Aorta (tissue), 5 donors: ENCODE measurements at regions of chr14 and their contacts with region 1.

Region 1: GRCh38 chr14:50954811-50955372 is 10.6 kb upstream of the PYGL start:
- DNase-seq: no peak
- ATAC-seq: peak; percentile 85
- H3K4me3 ChIP-seq: no peak overlapping the region
- H3K27ac ChIP-seq: no peak overlapping the region
- H3K4me1 ChIP-seq: no peaks in the 10 kb centered on the region
- H3K27me3 ChIP-seq: no peaks in the 10 kb centered on the region

Region 2: DNA sequence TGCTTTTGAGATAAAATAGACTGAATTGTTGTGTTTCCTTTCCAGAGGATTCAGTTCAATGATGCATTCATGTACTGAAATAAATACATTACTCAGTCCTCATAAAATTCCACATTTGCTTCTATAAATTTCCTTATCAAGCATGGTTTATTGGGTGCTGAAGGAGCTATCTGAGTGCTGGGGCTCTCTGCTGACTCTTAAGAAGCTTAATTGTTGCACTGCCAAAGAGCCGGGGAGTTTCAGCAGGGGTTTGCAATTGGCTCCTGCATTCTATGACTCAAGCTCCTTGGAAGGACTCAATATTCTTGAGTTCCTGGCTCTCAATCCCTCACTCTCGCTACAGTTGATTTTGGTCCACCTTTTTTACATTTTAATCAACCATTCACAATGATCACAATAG is 59.2 kb after region 1 on chr14:
- intact Hi-C with region 1: no loop called
- DNase-seq: peak in 1 of 2 donors; percentile 59
- ATAC-seq: peak; percentile 88
- H3K4me3 ChIP-seq: no peak overlapping the region
- H3K27ac ChIP-seq: no peak overlapping the region
- H3K4me1 ChIP-seq: peaks cover 1 to 3% of the 10 kb centered on the region in 2 donors
- H3K27me3 ChIP-seq: no peaks in the 10 kb centered on the region

Region 3: GRCh38 chr14:51094901-51095853 is 140.3 kb after region 1 on chr14 and contains the start of gene TRIM9:
- intact Hi-C with region 1: loop called in 1 of 2 experiments (anchors 5 kb)
- DNase-seq: peak; percentile 94 to 95
- ATAC-seq: peak; percentile 91
- H3K4me3 ChIP-seq: peak within 1 kb of the TSS; percentile 36 to 65
- H3K27ac ChIP-seq: no peak within 1 kb of the TSS
- H3K4me1 ChIP-seq: no peaks in the 10 kb centered on the region
- H3K27me3 ChIP-seq: no peaks in the 10 kb centered on the region
- total RNA-seq, gene TRIM9: 1.3 to 7.9 TPM

Region 4: DNA sequence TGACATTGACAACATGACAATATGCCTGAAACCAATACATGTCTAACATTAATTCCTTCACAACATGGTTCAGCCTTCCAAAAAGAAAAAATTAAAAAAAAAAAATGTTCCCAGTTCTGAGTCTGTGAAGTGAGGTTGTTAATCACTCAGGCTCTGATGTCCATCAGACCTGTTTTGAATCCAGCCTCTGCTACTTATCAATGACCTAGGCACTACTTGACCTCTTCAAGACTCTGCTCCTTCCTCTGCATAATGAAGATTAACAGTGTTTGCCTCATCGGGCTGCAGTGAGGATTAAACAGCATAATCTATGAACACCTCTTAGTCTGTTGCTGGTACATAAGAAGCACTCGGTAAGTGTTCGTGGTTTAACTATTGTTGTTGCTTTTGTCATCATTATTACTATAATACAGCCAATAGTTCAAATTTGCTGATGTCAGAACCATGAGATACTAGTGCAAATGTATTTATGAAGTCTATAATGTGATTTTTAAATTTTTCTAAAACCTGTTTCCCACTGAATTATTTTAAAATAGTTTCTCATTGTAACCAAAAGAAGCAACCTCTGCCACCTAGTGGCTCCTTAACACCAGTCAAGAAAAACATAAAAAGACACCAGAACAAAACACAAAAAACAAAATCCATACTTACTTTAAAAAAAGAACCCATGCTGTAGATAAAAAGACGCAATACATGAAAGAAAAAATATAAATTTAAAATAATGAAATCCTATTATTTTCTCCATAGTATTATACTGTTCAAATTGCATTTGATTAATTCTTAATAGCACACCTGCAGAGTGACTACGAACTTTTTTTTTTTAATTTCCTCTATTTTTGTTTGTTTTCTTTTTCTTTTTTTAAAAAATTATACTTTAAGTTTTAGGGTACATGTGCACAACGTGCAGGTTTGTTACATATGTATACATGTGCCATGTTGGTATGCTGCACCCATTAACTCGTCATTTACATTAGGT is 264.9 kb after region 1 on chr14:
- intact Hi-C with region 1: loop called (anchors 2 to 5 kb)
- DNase-seq: no peak
- ATAC-seq: no peak
- H3K4me3 ChIP-seq: no peak overlapping the region
- H3K27ac ChIP-seq: no peak overlapping the region
- H3K4me1 ChIP-seq: no peaks in the 10 kb centered on the region
- H3K27me3 ChIP-seq: no peaks in the 10 kb centered on the region